Posterior cingulate gyrus (tissue), 11 donors: ENCODE measurements at regions of chr6 and their contacts with region 1.

Region 1: DNA sequence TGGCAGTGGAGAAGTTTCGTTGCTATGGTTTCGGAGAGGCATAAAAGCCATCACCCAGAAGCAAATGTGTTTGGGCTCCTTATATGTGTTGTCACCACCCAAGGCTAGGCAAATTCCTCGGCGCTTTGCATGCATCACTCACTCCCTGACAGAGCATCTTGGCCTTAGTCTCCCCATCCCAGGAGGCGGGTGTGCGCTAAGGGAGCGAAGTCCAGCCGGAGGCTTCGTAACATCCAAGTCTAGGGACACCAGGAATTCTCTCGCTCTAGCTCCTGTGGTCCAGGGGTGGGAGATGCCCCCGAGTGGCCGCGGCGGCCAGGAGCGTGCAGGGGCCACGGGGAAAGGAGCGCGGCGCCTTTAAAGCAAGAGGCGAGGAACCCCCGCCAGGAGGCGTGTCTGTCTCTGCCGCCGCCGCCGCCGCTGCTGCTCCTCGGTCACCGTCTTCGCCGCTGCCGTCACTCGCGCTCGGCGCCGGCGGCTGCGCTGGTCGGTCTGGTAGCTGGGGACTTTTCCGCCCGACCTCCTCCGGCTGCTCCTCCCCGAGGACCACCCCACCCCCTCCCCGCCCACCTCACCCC is at the start of gene GRIK2:
- DNase-seq: peak in 9 of 10 donors; percentile 46 to 95 (median 70)

Region 2: DNA sequence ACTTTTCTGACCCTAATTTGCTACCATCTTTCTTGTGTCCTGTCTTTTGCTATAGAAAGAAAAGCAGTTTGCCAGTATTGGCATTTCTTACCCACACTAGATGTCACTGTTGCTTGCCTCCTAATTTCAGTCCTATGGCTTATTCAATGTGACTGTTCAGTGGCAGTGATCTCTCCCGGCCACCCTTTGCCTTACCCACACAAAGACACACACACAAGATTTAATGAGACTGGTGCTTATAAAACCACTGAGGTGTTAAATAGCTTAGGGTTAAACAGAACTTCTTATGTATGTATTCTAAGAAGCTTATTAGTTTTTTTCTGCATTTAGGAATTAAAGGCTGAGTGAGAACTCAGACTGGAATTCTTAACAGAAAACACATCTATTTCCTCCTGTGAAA is 278.6 kb before region 1 on chr6:
- intact Hi-C with region 1: loop called (anchors 10 kb)
- DNase-seq: peak in 2 of 10 donors; percentile 9 to 13

Region 3: GRCh38 chr6:101445527-101445926 is 52.2 kb after region 1 on chr6:
- intact Hi-C with region 1: no loop called
- DNase-seq: no peak

Region 4: GRCh38 chr6:101539536-101540240 is 146.3 kb after region 1 on chr6:
- intact Hi-C with region 1: no loop called
- DNase-seq: no peak

Region 5: GRCh38 chr6:102015431-102015830 is 622.1 kb after region 1 on chr6:
- intact Hi-C with region 1: loop called (anchors 5 kb)
- DNase-seq: peak in 2 of 10 donors; percentile 25 to 79